ENCODE measurements at regions of chr7 and their contacts with region 1.

Region 1: GRCh38 chr7:43847496-43847895 is 21.8 kb downstream of the MRPS24 start:
- DNase-seq: no peak
- ATAC-seq: no peak
- H3K4me3 ChIP-seq: no peak overlapping the region
- H3K27ac ChIP-seq: no peak overlapping the region
- H3K4me1 ChIP-seq: no peaks in the 10 kb centered on the region
- H3K27me3 ChIP-seq: no peaks in the 10 kb centered on the region
- CTCF ChIP-seq: no peak
- POLR2A ChIP-seq: no peak

Region 2: DNA sequence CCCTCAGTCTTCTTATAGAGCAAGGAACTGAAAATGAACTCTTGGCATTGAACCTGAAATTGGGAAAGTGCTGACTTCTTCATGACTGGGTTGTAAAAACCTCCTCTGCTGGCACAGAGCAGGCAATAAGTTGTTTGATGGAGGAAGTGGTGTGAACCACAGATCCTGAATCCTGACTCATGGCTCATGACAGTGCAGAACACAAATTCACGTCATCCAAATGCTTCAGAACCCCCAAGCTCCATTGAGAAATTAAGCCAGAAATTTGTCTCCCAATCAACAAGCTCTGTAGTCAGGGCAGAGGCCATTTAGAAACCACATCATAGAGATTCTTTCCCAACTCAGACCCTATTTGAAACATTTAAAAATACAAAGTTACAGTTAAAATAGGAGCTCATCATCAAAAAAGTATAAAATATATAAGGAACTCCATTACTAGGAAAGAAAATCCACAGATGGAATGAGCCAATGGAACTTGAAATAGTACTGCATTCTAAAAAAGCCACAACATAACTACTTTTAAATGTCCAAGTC is 274.9 kb before region 1 on chr7:
- intact Hi-C with region 1: loop called (anchors 10 kb)
- DNase-seq: peak in 2 of 4 donors; percentile 14 to 74
- ATAC-seq: peak; percentile 67
- H3K4me3 ChIP-seq: no peak overlapping the region
- H3K27ac ChIP-seq: no peak overlapping the region
- H3K4me1 ChIP-seq: peaks cover 2% of the 10 kb centered on the region
- H3K27me3 ChIP-seq: no peaks in the 10 kb centered on the region
- CTCF ChIP-seq: no peak
- POLR2A ChIP-seq: no peak

Region 3: DNA sequence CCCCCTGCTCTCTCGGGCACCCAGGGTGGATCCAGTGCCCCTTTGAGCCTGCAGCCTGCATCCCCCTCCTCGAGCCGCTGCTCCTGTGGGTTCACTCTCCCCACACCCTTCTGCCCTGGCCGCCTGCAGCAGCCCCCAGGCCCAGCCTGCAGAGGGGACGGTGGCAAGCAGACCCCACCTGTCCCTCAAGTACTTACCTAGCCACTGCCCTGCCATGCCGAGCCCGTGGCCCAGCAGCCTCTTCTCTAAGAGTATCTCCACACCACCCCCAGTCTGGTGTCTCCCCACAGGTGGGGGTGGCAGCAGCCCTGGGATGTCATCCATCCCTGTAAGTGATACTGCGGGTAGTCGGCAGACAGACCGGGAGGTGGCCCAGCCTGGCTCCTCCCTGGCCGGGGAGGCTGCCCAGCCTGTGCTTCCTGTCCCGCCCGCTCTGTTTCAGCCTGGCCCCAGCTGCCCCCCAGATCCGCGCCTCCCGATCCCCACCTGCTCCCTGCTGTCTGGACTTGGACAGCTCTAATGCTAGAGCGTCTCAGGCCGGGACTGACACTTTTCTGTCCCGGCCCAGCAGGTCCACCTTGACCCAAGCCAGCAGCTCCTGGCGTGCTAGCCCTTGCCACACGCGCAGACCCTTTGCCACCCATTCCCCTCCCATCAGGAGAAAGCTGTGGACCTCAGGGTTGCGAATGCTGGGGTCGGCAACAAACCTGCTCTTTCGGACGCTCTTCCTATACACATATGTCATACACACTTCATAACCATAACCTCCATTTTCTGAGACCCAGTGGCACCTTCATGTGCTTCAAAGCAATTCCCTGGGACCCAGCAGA is 378.3 kb after region 1 on chr7:
- intact Hi-C with region 1: no loop called
- DNase-seq: no peak
- ATAC-seq: no peak
- H3K4me3 ChIP-seq: no peak overlapping the region
- H3K27ac ChIP-seq: no peak overlapping the region
- H3K4me1 ChIP-seq: peaks cover 24% of the 10 kb centered on the region
- H3K27me3 ChIP-seq: no peaks in the 10 kb centered on the region
- CTCF ChIP-seq: no peak
- POLR2A ChIP-seq: no peak

Region 4: GRCh38 chr7:45402480-45403218 is 1555.2 kb after region 1 on chr7:
- intact Hi-C with region 1: no loop called
- DNase-seq: peak in 1 of 4 donors; percentile 21
- ATAC-seq: no peak
- H3K4me3 ChIP-seq: no peak overlapping the region
- H3K27ac ChIP-seq: no peak overlapping the region
- H3K4me1 ChIP-seq: no peaks in the 10 kb centered on the region
- H3K27me3 ChIP-seq: no peaks in the 10 kb centered on the region
- CTCF ChIP-seq: no peak
- POLR2A ChIP-seq: no peak

Measured in body of pancreas (tissue), 4 donors.